ENCODE measurements at regions of chr4 and their contacts with region 1.

Region 1: GRCh38 chr4:85084380-85085094 is 118.0 kb upstream of the WDFY3 start:
- DNase-seq: no peak
- H3K4me3 ChIP-seq: no peak overlapping the region
- H3K27ac ChIP-seq: no peak overlapping the region
- H3K4me1 ChIP-seq: no peaks in the 10 kb centered on the region
- H3K27me3 ChIP-seq: no peaks in the 10 kb centered on the region
- CTCF ChIP-seq: peak in 2 of 3 experiments; percentile 48 to 60; a peak in 2 of 4 replicates
- EP300 ChIP-seq: no peak
- POLR2A ChIP-seq: no peak
- RAD21 ChIP-seq: peak; percentile 72 to 75

Region 2: GRCh38 chr4:85050741-85051140 is 33.8 kb before region 1 on chr4:
- CTCF ChIA-PET with region 1: interaction called, 10 read pairs
- POLR2A ChIA-PET with region 1: no interaction called
- DNase-seq: no peak
- H3K4me3 ChIP-seq: no peak overlapping the region
- H3K27ac ChIP-seq: no peak overlapping the region
- H3K4me1 ChIP-seq: no peaks in the 10 kb centered on the region
- H3K27me3 ChIP-seq: no peaks in the 10 kb centered on the region
- CTCF ChIP-seq: no peak
- EP300 ChIP-seq: no peak
- POLR2A ChIP-seq: no peak
- RAD21 ChIP-seq: no peak

Region 3: DNA sequence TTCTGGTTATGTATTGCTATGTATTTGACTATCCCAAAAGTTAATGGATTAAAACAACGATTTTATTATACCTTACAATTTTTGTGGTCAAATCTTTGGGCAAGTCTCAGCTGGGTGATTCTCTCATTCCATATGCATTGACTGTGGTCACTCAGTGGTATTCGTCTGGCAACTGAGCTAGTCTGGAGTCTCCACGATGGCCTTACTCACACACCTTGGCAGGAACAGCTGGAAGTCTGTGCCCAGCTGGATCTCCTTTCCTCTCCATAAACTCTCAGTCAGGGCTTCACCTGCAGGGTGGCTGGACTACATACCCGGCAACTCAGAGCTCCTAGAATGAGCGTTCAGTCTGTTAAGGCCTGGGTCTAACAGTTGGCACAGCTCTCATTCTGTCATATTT is 23.0 kb after region 1 on chr4:
- CTCF ChIA-PET with region 1: interaction called, 15 read pairs
- POLR2A ChIA-PET with region 1: no interaction called
- DNase-seq: no peak
- H3K4me3 ChIP-seq: no peak overlapping the region
- H3K27ac ChIP-seq: no peak overlapping the region
- H3K4me1 ChIP-seq: no peaks in the 10 kb centered on the region
- H3K27me3 ChIP-seq: no peaks in the 10 kb centered on the region
- CTCF ChIP-seq: no peak
- EP300 ChIP-seq: no peak
- POLR2A ChIP-seq: no peak
- RAD21 ChIP-seq: no peak

Region 4: GRCh38 chr4:85147439-85148076 is 63.0 kb after region 1 on chr4:
- CTCF ChIA-PET with region 1: interaction called, 10 read pairs
- POLR2A ChIA-PET with region 1: no interaction called
- DNase-seq: no peak
- H3K4me3 ChIP-seq: no peak overlapping the region
- H3K27ac ChIP-seq: no peak overlapping the region
- H3K4me1 ChIP-seq: no peaks in the 10 kb centered on the region
- H3K27me3 ChIP-seq: no peaks in the 10 kb centered on the region
- CTCF ChIP-seq: peak in 2 of 3 experiments; percentile 47 to 60; a peak in 2 of 4 replicates
- EP300 ChIP-seq: no peak
- POLR2A ChIP-seq: no peak
- RAD21 ChIP-seq: peak; percentile 77 to 79

Region 5: DNA sequence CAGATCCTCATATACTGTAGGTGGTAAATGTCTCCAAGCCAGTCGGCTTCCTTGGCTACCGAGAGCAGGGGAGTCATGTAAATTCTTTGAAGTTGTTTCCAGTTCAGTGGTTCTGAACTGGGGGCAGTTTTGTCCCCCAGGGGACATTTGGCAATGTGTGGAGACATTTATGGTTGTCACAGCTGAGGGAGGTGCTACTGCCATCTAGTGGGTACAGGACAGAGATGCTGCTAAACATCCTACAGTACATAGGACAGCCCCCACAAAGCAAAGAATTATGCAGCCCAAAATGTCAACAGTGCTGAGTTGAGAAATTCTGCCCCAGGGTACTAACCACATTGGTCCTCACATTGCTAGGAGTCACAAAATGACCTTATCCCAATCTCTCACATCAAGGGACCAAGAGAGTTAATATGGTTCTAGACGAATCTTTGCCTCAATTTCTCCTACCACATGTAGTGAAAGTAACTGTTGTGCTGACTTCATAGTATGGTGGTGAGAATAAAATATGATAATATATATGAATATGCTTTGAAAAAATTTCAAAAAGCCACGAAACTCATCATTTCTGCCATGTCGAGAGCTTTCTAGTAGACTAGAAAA is 286.0 kb after region 1 on chr4:
- CTCF ChIA-PET with region 1: interaction called, 17 read pairs
- POLR2A ChIA-PET with region 1: no interaction called
- DNase-seq: peak; percentile 7 to 63
- H3K4me3 ChIP-seq: no peak overlapping the region
- H3K27ac ChIP-seq: no peak overlapping the region
- H3K4me1 ChIP-seq: peaks cover 0 to 10% (median 0%) of the 10 kb centered on the region in 4 experiments; a peak in 1 of 7 replicates
- H3K27me3 ChIP-seq: no peaks in the 10 kb centered on the region
- CTCF ChIP-seq: peak; percentile 52 to 84 (median 79)
- EP300 ChIP-seq: no peak
- POLR2A ChIP-seq: no peak
- RAD21 ChIP-seq: peak; percentile 82 to 89

Measured in H1 (cell line).